ENCODE measurements at regions of chr9 and their contacts with region 1.

Region 1: DNA sequence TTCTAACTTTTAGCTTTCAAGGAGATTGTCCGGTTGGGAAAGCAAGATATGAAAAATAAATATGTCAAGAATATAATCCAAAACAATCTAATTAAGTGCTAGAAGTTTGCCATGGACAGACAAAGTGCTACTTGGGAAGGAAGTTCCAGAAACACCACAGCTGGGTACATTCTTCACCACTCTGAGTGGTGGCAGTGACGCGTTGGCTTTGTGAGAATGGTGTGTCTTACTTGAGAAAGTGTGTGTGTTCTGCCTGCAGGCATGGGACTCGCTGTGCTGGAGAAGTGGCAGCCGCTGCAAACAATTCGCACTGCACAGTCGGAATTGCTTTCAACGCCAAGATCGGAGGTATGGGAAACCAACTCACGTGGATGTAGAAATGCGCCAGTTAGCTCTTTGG is 177.2 kb downstream of the PCSK5 start:
- DNase-seq: no peak
- ATAC-seq: no peak
- H3K4me3 ChIP-seq: no peak overlapping the region
- H3K4me3 Mint-ChIP-seq: no peak overlapping the region
- H3K27ac ChIP-seq: no peak overlapping the region
- H3K27ac Mint-ChIP-seq: no peak overlapping the region
- H3K4me1 ChIP-seq: no peaks in the 10 kb centered on the region
- H3K4me1 Mint-ChIP-seq: peaks cover 7% of the 10 kb centered on the region
- H3K27me3 ChIP-seq: no peaks in the 10 kb centered on the region
- H3K27me3 Mint-ChIP-seq: no peaks in the 10 kb centered on the region
- CTCF ChIP-seq: no peak

Region 2: DNA sequence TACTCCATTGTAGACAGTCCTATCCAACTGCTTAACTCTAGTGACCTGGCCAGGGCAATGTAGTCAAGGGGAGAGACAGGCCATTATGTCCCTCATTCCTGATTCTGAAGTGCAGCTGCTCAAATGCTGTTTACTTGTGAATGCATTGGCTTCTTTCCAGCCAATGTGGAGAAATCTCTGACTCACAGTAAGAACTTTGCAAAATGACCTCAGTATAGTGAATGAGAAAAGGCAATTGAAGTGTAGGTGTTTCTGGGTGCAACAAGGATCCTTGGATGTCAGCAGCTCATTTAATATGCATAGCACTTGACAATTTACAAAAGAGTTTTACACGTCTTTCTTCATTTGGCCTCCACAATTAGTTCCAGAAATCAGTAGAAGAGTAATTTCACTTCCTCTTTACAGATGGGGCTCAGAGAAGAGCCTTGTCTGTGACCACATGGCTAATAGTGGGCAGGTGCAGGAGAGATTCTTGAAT is 612.2 kb before region 1 on chr9:
- CTCF ChIA-PET with region 1: no interaction called
- POLR2A ChIA-PET with region 1: no interaction called
- intact Hi-C with region 1: no loop called
- DNase-seq: no peak
- ATAC-seq: no peak
- H3K4me3 ChIP-seq: no peak overlapping the region
- H3K4me3 Mint-ChIP-seq: no peak overlapping the region
- H3K27ac ChIP-seq: no peak overlapping the region
- H3K27ac Mint-ChIP-seq: no peak overlapping the region
- H3K4me1 ChIP-seq: no peaks in the 10 kb centered on the region
- H3K4me1 Mint-ChIP-seq: no peaks in the 10 kb centered on the region
- H3K27me3 ChIP-seq: no peaks in the 10 kb centered on the region
- H3K27me3 Mint-ChIP-seq: peaks cover 6% of the 10 kb centered on the region
- CTCF ChIP-seq: no peak

Region 3: DNA sequence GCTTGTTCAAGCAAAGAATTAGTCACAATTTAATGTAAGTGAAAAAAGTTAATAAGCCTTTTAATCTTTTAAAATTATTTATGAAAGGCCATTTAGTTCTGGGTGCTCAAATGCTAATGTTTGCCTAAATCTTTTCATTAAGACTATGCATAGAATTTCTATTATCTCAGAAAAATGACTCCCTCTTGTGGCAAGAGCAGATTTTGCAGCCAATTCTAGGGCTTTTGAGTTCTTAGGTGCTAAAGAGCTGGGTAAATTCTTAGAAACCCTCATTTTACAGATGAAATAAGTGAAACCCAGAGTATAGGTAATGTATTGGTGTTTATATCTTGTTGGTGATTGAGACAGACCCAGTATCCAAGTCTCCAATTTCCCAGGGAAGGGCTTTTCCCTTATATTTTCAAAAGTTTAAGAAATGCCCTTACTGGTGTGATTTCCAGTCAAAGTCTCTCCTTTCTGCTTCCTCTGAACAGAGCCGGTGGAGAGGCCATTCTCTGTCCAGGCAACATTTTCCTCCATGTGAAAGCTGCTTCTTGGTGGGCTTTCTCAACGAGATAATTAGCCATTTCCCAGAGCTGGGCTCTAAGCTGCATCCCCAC is 201.3 kb before region 1 on chr9:
- CTCF ChIA-PET with region 1: no interaction called
- POLR2A ChIA-PET with region 1: no interaction called
- intact Hi-C with region 1: no loop called
- DNase-seq: peak in 10 of 14 experiments; percentile 7 to 67 (median 31)
- ATAC-seq: no peak
- H3K4me3 ChIP-seq: no peak overlapping the region
- H3K4me3 Mint-ChIP-seq: no peak overlapping the region
- H3K27ac ChIP-seq: no peak overlapping the region
- H3K27ac Mint-ChIP-seq: no peak overlapping the region
- H3K4me1 ChIP-seq: no peaks in the 10 kb centered on the region
- H3K4me1 Mint-ChIP-seq: peaks cover 19% of the 10 kb centered on the region
- H3K27me3 ChIP-seq: no peaks in the 10 kb centered on the region
- H3K27me3 Mint-ChIP-seq: no peaks in the 10 kb centered on the region
- CTCF ChIP-seq: peak; percentile 83

Region 4: GRCh38 chr9:76116913-76117312 is 49.2 kb after region 1 on chr9:
- CTCF ChIA-PET with region 1: no interaction called
- POLR2A ChIA-PET with region 1: no interaction called
- intact Hi-C with region 1: loop called in 1 of 2 experiments (anchors 5 kb)
- DNase-seq: no peak
- ATAC-seq: no peak
- H3K4me3 ChIP-seq: no peak overlapping the region
- H3K4me3 Mint-ChIP-seq: no peak overlapping the region
- H3K27ac ChIP-seq: no peak overlapping the region
- H3K27ac Mint-ChIP-seq: peak overlapping the region; percentile 30
- H3K4me1 ChIP-seq: no peaks in the 10 kb centered on the region
- H3K4me1 Mint-ChIP-seq: peaks cover 10% of the 10 kb centered on the region
- H3K27me3 ChIP-seq: no peaks in the 10 kb centered on the region
- H3K27me3 Mint-ChIP-seq: no peaks in the 10 kb centered on the region
- CTCF ChIP-seq: no peak

Region 5: DNA sequence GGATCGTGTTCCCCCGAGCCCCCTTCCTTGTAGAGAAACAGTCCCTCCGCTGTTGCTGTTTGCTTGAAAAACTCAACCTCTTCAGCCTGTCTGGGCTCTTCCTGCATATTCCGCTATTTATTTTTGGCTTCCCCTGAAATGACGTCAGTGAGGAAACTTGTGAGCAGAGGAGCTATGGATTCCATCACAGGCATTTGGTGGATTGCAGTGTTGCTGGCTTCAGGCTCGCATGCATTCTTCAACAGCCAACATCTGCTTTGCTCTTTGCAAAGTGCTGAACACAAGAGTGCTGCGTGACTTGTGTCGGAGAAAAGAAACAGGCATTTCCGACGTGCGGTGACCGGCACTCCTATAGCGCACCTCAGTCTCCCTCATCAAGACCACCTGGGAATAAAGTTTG is 93.8 kb after region 1 on chr9:
- CTCF ChIA-PET with region 1: no interaction called
- POLR2A ChIA-PET with region 1: no interaction called
- intact Hi-C with region 1: no loop called
- DNase-seq: no peak
- ATAC-seq: no peak
- H3K4me3 ChIP-seq: no peak overlapping the region
- H3K4me3 Mint-ChIP-seq: no peak overlapping the region
- H3K27ac ChIP-seq: no peak overlapping the region
- H3K27ac Mint-ChIP-seq: no peak overlapping the region
- H3K4me1 ChIP-seq: no peaks in the 10 kb centered on the region
- H3K4me1 Mint-ChIP-seq: peaks cover 7% of the 10 kb centered on the region
- H3K27me3 ChIP-seq: no peaks in the 10 kb centered on the region
- H3K27me3 Mint-ChIP-seq: no peaks in the 10 kb centered on the region
- CTCF ChIP-seq: no peak

Measured in CD4-positive, alpha-beta T cell (primary cell).